CD4-positive, alpha-beta T cell (primary cell): ENCODE measurements at regions of chr13 and their contacts with region 1.

Region 1: DNA sequence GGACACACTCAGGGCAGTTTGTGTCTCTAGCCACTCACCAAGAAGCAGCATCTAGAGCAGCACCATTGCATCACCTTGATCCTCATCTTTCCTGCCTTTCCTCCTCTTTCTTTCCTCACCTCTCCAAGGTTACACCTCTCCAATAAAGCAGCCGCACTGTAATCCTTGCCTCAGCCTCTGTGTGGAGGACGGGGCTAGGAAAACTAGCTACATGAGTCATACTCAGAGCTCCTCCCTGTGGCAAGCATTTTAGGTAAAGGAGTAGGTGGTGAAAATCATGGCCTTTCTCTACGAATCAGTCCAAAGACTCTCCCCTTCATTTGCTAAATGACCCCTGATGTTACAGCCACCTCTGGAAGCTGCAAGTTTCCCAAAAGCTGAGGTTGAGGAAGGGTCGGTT is 108.9 kb downstream of the DNAJC15 start:
- DNase-seq: peak in 2 of 14 experiments; percentile 19 to 24
- ATAC-seq: no peak
- H3K4me3 ChIP-seq: no peak overlapping the region
- H3K4me3 Mint-ChIP-seq: no peak overlapping the region
- H3K27ac ChIP-seq: no peak overlapping the region
- H3K27ac Mint-ChIP-seq: no peak overlapping the region
- H3K4me1 ChIP-seq: peaks cover 5% of the 10 kb centered on the region
- H3K4me1 Mint-ChIP-seq: peaks cover 13% of the 10 kb centered on the region
- H3K27me3 ChIP-seq: no peaks in the 10 kb centered on the region
- H3K27me3 Mint-ChIP-seq: peaks cover 23% of the 10 kb centered on the region
- CTCF ChIP-seq: peak; percentile 18

Region 2: GRCh38 chr13:43113603-43114002 is 18.7 kb before region 1 on chr13:
- CTCF ChIA-PET with region 1: no interaction called
- POLR2A ChIA-PET with region 1: no interaction called
- intact Hi-C with region 1: loop called in 1 of 2 experiments (anchors 2 kb)
- DNase-seq: no peak
- ATAC-seq: no peak
- H3K4me3 ChIP-seq: no peak overlapping the region
- H3K4me3 Mint-ChIP-seq: no peak overlapping the region
- H3K27ac ChIP-seq: no peak overlapping the region
- H3K27ac Mint-ChIP-seq: no peak overlapping the region
- H3K4me1 ChIP-seq: no peaks in the 10 kb centered on the region
- H3K4me1 Mint-ChIP-seq: no peaks in the 10 kb centered on the region
- H3K27me3 ChIP-seq: no peaks in the 10 kb centered on the region
- H3K27me3 Mint-ChIP-seq: no peaks in the 10 kb centered on the region
- CTCF ChIP-seq: no peak

Region 3: DNA sequence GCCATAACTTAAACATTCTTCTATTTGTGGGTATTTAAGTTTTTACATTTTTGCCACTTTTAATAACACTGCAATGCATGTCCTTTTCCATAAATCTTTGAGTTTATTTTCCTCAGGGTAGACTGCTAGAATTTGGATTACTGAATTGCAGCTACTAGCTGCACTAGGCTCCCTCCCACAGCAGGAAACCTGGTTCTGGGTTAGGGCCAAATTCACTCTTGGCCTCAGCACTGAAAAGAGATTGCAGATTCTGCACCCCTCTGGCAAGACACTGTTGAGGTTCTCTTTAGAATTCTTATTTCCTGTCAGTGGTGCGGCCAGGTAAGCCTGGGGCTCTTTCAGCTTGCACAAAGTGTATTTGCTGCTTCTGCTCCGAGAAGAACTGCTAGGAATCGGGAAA is 498.8 kb after region 1 on chr13:
- CTCF ChIA-PET with region 1: no interaction called
- POLR2A ChIA-PET with region 1: no interaction called
- intact Hi-C with region 1: no loop called
- DNase-seq: no peak
- ATAC-seq: no peak
- H3K4me3 ChIP-seq: no peak overlapping the region
- H3K4me3 Mint-ChIP-seq: no peak overlapping the region
- H3K27ac ChIP-seq: no peak overlapping the region
- H3K27ac Mint-ChIP-seq: no peak overlapping the region
- H3K4me1 ChIP-seq: no peaks in the 10 kb centered on the region
- H3K4me1 Mint-ChIP-seq: no peaks in the 10 kb centered on the region
- H3K27me3 ChIP-seq: no peaks in the 10 kb centered on the region
- H3K27me3 Mint-ChIP-seq: peaks cover 15% of the 10 kb centered on the region
- CTCF ChIP-seq: no peak